ENCODE measurements at regions of chr1 and their contacts with region 1.

Region 1: GRCh38 chr1:208809876-208810275 is 565.7 kb upstream of the PLXNA2 start:
- DNase-seq: no peak
- ATAC-seq: no peak

Region 2: DNA sequence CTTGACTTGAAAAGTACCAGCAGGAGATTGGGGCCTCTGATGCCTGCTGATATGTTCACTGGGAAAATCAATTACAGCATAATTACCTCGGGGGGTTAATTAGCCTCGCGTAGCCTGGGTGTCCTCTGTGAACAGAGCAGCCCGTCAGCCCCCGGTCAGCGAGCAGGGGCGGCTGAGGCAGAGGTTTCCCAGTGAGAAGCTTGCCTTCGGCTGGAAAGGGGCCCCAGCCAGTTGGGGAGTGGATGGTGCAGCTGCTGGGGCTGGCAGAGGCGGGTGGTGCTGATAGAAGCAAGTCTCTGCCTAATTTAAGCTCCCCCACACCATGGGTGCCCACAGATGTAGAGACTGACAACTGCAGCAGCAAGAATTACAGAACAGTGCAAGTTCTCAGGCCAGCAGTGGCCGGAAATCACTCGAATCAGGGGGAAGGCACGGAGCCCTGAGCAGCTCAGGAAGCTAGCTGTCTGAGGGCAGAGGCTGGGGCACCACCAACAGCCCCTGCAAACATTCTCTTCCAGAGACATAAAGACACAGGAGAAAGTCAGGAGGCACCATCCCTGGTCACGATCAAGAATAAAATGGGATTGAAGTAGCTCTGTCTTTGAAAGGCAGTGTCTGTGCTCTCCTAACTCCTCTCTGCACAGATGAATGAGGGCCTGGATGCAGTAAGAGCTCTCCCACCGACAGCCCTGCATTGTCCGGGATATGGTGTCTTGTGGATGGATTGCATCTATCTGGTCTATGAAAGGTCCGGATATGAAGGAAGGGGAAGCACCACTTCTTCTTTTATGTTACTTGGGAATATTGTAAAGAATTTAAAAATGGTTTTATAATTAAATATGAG is 732.4 kb before region 1 on chr1:
- intact Hi-C with region 1: loop called (anchors 5 kb)
- DNase-seq: no peak
- ATAC-seq: peak; percentile 47

Region 3: DNA sequence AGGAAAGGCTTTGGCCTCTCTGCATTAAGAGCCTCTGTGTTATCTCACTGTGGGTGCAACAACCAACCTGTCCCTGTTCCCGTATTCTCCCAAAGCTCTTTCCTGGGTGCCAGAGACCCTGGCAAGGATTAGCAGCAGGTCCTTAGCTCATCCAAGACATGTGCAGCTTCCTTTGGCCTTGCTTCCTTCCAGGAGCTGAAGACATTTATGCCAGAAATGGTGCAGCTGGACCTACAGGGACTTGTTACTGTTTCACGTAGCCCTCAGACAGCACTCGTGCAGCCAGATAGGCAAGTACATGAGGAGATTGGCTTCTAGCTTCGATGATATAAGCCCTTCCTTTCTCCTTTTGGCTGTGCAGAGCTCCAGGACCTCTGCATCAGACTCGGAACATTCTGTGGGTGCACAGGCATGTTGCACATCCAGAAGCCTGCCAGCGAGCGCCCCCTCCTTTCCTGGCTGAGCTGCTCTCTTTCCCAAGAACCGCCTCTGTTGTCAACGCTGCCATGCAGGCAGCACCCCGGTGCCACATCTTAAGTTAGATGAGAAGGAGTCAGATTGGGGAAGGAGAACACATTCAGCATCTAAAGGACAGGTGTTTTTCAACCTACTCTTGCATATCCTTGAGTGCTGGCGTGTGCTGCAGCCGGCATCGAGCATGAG is 281.2 kb before region 1 on chr1:
- intact Hi-C with region 1: no loop called
- DNase-seq: no peak
- ATAC-seq: peak; percentile 55

Region 4: DNA sequence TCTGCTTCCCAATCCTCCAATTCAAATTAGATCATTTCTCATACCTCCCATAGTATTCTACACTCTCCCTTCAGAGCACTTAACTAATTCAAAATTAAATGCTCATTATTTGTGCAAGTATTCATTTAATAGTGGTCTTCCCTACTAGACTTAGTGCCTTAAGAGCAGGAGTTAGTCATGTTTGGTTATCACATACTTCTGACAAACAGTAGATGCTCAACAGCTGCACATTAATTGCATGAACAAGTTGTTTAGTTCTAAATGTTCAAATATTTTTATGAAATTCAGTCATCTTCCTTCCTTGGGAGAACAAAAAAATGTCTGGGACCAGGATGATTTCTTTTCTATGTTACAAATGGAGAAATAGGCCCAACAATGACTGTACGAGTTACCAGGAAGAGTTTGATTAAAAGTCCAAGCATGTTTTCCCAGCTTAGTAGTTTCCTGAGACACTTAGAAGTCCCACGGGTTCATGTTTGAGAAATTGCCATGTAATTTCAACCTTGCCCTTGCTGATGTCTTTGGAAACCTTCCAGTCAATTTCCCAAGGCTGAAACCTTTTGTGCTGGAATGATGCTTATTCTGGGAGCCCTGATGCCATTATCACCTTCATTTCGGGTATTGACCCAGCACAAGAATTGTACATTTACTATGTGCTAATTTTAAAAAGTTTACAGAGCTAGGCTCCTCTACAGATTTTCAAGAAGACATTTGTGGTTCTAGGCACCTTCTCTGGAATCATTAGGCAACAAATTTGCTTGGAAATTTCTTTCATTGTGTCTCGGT is 127.8 kb before region 1 on chr1:
- intact Hi-C with region 1: no loop called
- DNase-seq: no peak
- ATAC-seq: no peak